Common myeloid progenitor, CD34-positive (primary cell): ENCODE measurements at regions of chr2 and their contacts with region 1.

Region 1: DNA sequence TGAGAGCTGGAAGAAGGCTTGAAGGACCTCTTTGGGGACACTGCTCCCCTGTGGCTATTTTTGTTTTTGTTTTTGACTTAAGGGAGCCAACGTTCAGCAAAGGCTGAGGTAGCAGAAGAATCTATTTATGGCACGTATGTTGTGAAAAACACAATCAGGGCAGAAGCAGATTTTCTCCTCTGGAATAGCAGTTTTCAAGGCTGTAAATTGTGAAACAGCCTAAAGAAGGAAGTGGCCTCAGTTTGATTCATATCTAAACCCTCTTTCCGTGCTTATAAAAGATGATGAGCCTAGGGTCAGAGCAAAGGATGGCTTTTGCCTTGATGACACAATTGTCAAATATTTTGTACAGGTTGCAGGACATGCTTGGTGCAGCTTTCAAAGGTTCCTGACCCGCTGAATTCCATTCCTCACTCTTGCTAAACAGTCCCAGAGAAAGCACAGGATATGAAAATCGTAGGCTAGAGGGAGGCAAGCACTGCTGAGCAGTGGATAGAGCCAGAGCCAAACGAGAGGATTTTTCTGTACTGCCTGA is 106.2 kb upstream of the DLX2 start:
- DNase-seq: peak in 2 of 3 donors; percentile 52 to 60
- H3K4me3 ChIP-seq: peak overlapping the region in 1 of 7 experiments; percentile 29
- H3K27ac ChIP-seq: no peak overlapping the region
- H3K4me1 ChIP-seq: peaks cover 0 to 35% (median 26%) of the 10 kb centered on the region in 4 experiments
- H3K27me3 ChIP-seq: no peaks in the 10 kb centered on the region

Region 2: DNA sequence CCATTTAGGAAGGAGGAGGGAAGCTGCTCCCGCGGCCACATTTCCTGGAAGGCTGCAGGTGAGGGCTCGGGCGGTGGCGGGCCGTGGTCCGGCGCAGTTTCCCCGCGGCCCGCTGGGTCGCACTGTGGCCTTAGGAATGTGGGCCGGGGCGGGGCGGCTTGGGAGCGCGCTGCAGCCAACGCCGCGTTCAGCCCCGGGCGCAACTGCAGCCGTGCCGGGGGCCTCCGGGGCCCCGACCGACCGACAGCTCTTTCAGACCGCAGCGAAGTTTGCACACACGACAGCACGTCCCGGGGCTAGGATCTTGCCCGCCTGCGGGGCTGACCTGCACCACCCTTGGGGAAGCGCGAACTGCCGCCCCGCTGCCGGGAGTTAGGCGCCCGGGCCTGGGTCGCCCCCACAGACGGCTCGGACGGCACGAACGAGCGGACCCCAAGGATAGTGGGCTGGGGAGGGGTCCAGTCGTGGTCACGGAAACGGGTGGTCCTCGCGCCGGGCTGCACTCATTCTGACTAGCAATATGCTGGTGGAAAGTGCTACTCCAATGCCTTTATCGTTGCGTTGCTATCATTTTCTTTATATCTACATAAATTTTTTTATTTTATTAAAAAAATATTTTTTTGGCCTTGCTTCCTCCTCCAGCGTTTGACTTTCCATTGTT is 36.2 kb before region 1 on chr2:
- CTCF ChIA-PET with region 1: interaction called, 20 read pairs
- POLR2A ChIA-PET with region 1: no interaction called
- DNase-seq: peak; percentile 69 to 82 (median 76)
- H3K4me3 ChIP-seq: peak overlapping the region; percentile 53 to 86 (median 74)
- H3K27ac ChIP-seq: no peak overlapping the region
- H3K4me1 ChIP-seq: peaks cover 0 to 23% (median 9%) of the 10 kb centered on the region in 4 experiments
- H3K27me3 ChIP-seq: no peaks in the 10 kb centered on the region

Region 3: DNA sequence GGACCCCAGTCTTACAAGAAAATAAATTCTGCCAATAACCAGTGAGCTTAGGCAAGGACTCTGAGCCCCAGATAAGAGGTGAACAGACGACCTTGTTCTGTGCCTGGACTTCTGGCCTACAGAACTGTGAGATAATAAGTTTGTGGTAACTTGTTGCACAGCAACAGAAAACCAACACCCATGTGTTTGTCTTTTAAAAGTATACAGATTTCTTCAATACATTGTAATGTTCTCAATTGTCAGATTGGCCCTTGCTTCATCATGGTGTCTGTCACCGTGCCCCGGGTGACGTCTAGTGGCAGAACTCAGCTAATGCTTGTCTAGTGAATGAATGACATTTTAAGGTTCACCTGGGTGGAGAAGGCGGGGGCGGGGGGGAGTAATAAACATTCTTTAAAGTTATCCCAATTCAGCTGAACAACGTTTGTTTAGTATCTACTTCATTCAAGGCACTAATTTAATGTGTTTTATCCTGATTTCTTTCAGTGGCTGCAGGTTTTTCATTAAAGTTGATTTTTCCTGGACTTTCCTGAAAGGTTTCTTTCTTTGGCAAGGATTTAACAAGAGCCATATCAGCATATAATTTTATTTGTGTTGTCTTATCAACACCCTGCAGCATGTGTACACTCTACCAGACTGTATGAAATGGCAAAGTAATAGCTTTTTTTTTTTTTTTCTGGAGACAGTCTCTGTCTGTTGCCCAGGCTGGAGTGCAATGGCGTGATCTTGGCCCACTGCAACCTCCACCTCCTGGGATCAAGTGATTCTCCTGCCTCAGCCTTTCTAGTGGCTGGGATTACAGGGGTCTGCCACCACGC is 17.6 kb after region 1 on chr2:
- CTCF ChIA-PET with region 1: interaction called, 17 read pairs
- POLR2A ChIA-PET with region 1: no interaction called
- DNase-seq: peak; percentile 31 to 86 (median 72)
- H3K4me3 ChIP-seq: no peak overlapping the region
- H3K27ac ChIP-seq: no peak overlapping the region
- H3K4me1 ChIP-seq: peaks cover 6 to 88% (median 59%) of the 10 kb centered on the region in 4 experiments
- H3K27me3 ChIP-seq: no peaks in the 10 kb centered on the region

Region 4: GRCh38 chr2:172253190-172254052 is 44.6 kb after region 1 on chr2:
- CTCF ChIA-PET with region 1: no interaction called
- POLR2A ChIA-PET with region 1: no interaction called
- DNase-seq: peak; percentile 97 to 99 (median 99)
- H3K4me3 ChIP-seq: peak overlapping the region in 2 of 7 experiments; percentile 0 to 19
- H3K27ac ChIP-seq: peak overlapping the region; percentile 40 to 44
- H3K4me1 ChIP-seq: peaks cover 5 to 51% (median 46%) of the 10 kb centered on the region in 4 experiments
- H3K27me3 ChIP-seq: no peaks in the 10 kb centered on the region

Region 5: GRCh38 chr2:172404824-172405223 is 196.0 kb after region 1 on chr2:
- CTCF ChIA-PET with region 1: no interaction called
- POLR2A ChIA-PET with region 1: no interaction called
- DNase-seq: no peak
- H3K4me3 ChIP-seq: no peak overlapping the region
- H3K27ac ChIP-seq: no peak overlapping the region
- H3K4me1 ChIP-seq: no peaks in the 10 kb centered on the region
- H3K27me3 ChIP-seq: no peaks in the 10 kb centered on the region